ENCODE measurements at regions of chr3 and their contacts with region 1.

Region 1: GRCh38 chr3:158434412-158435038 is 136.5 kb upstream of the MLF1 start:
- DNase-seq: peak; percentile 17
- H3K4me3 ChIP-seq: no peak overlapping the region; a peak in 1 of 4 replicates
- H3K27ac ChIP-seq: no peak overlapping the region
- H3K4me1 ChIP-seq: peaks cover 0 to 12% of the 10 kb centered on the region in 2 experiments; a peak in 3 of 4 replicates
- H3K27me3 ChIP-seq: no peaks in the 10 kb centered on the region
- CTCF ChIP-seq: peak; percentile 90
- EP300 ChIP-seq: 0 out of 4 replicates have a peak, but pooled peaks of 1 of the 2 experiments have one; percentile 17
- RAD21 ChIP-seq: peak; percentile 95

Region 2: DNA sequence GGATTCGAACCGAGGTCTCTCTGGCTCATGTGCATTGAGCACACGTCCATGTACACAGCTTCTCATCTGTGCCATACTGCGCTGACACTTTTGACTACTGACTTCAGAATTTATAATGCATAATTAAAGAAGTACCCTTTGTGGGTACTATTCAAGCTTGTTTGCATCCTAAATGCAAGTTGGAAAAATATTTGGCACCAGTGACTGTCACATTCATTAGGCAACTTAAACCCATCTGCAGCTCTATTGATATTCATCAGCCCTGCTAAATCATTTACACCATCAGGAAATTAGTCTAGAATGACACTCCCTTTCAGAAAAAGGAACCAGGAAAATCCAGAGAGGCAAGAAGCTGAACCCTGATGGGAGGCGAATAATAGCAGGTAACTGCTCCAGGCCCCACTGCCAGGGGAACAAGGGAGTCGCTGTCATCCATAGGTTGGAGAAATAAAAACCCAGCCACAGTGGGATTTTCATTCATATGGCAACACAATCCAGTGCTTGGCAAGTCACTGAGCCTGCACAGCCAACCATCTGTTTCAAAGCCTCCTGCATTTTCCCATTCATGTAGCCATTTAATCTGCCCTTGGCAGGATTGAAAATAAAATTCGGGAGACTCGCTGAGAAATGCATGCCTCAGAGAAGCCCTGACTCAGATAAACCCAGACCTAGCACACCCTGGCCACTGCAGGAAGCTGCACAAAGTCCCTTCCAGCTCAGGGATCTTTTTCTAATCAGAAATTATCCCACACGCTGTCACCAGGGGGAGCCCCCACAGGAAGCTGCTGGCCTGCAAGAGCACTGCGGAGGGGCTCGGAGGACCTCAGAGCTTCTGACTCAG is 828.3 kb before region 1 on chr3:
- CTCF ChIA-PET with region 1: interaction called, 34 read pairs
- POLR2A ChIA-PET with region 1: no interaction called
- DNase-seq: peak; percentile 64
- H3K4me3 ChIP-seq: peak overlapping the region in 1 of 2 experiments; percentile 18; a peak in 1 of 4 replicates
- H3K27ac ChIP-seq: no peak overlapping the region
- H3K4me1 ChIP-seq: peaks cover 0 to 4% of the 10 kb centered on the region in 2 experiments; a peak in 1 of 4 replicates
- H3K27me3 ChIP-seq: no peaks in the 10 kb centered on the region
- CTCF ChIP-seq: peak; percentile 86
- EP300 ChIP-seq: no peak
- RAD21 ChIP-seq: peak; percentile 65

Region 3: GRCh38 chr3:158109804-158110657 is 324.5 kb before region 1 on chr3 and contains the start of gene RSRC1:
- CTCF ChIA-PET with region 1: interaction called, 13 read pairs
- POLR2A ChIA-PET with region 1: no interaction called
- DNase-seq: peak; percentile 90
- H3K4me3 ChIP-seq: peak within 1 kb of the TSS; percentile 87 to 93
- H3K27ac ChIP-seq: peak within 1 kb of the TSS; percentile 87 to 97
- H3K4me1 ChIP-seq: peaks cover 3 to 8% of the 10 kb centered on the region in 2 experiments; a peak in 3 of 4 replicates
- H3K27me3 ChIP-seq: no peaks in the 10 kb centered on the region
- CTCF ChIP-seq: no peak
- EP300 ChIP-seq: peak in 1 of 2 experiments; percentile 16; a peak in 1 of 4 replicates
- RAD21 ChIP-seq: peak; percentile 19; the same call in 1 of the 2 replicates
- polyA plus RNA-seq, gene RSRC1: 4.4 and 4.5 TPM in 2 replicates

Region 4: GRCh38 chr3:158488670-158489069 is 54.1 kb after region 1 on chr3:
- CTCF ChIA-PET with region 1: interaction called, 14 read pairs
- POLR2A ChIA-PET with region 1: no interaction called
- DNase-seq: peak; percentile 40
- H3K4me3 ChIP-seq: no peak overlapping the region
- H3K27ac ChIP-seq: peak overlapping the region in 1 of 2 experiments; percentile 96; a peak in 2 of 4 replicates
- H3K4me1 ChIP-seq: peaks cover 15 to 19% of the 10 kb centered on the region in 2 experiments; a peak in 3 of 4 replicates
- H3K27me3 ChIP-seq: no peaks in the 10 kb centered on the region
- CTCF ChIP-seq: no peak
- EP300 ChIP-seq: peak in 1 of 2 experiments; percentile 94; a peak in 2 of 4 replicates
- RAD21 ChIP-seq: no peak

Region 5: DNA sequence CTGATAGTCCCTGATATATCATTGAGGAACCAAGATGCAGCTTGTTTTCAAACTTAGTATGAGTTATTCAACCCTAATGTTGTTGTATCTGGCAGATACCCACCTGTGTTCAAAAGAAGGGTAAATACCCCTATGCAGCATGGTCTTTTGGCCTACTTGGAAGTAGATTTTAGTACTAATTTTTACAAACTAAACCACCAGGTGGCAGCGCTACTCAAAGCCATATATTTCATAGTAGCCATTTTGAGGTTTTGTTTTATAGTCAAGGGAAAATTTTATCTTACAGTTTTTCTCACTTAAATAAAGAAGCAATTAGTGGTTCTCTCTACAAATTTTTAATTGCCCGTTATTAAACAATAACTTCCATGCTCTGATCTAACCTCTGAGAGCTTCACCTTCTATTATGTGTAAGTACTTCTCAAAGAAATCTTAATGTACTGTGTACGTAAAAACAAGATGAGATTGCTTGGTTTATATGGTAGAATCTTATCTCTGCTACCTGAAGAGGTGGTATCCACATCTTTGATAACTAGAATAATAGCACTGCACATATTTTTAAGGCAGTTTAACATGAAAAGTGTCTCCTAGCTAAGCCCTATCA is 105.0 kb after region 1 on chr3:
- CTCF ChIA-PET with region 1: interaction called, 10 read pairs
- POLR2A ChIA-PET with region 1: no interaction called
- DNase-seq: peak; percentile 27
- H3K4me3 ChIP-seq: no peak overlapping the region
- H3K27ac ChIP-seq: no peak overlapping the region; a peak in 1 of 4 replicates
- H3K4me1 ChIP-seq: no peaks in the 10 kb centered on the region
- H3K27me3 ChIP-seq: no peaks in the 10 kb centered on the region
- CTCF ChIP-seq: peak; percentile 74
- EP300 ChIP-seq: no peak
- RAD21 ChIP-seq: peak; percentile 62